Gastrocnemius medialis (tissue), 4 donors: ENCODE measurements at regions of chr14 and their contacts with region 1.

Region 1: DNA sequence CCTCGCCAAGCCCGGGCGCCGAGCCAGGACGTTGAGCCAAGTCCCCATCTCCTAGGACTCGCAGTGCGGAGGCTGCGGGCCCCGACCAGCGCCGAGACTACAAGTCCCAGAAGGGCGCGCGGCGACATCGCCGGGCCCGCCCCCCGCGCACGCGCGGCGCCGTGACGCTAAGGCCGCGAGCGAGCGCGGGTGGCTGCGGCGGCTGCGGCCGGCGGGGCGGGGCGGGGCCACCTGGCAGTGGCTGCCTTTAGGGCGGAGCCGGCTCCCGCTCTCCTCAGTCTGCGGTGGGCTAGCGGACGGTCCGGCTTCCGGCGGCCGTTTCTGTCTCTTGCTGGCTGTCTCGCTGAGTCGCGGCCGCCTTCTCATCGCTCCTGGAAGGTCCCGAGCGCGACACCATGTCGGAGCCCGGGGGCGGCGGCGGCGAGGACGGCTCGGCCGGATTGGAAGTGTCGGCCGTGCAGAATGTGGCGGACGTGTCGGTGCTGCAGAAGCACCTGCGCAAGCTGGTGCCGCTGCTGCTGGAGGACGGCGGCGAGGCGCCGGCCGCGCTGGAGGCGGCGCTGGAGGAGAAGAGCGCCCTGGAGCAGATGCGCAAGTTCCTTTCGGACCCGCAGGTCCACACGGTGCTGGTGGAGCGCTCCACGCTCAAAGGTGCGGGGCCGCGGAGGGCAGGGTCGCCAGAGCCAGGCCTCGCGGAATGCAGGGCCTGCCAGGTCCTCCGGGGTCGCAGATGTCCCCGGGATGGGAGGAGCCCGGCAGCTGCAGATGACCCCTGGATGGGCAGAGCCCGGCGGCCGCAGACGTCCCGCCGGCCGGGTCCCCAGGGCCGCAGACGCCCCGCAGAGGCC is at the start of gene DYNC1H1:
- DNase-seq: peak; percentile 82 to 92
- ATAC-seq: peak; percentile 82 to 86
- H3K4me3 ChIP-seq: peak within 1 kb of the TSS; percentile 80 to 99 (median 94)
- H3K27ac ChIP-seq: peak within 1 kb of the TSS; percentile 92 to 98 (median 94)
- H3K4me1 ChIP-seq: peaks cover 38% of the 10 kb centered on the region in 2 donors
- H3K27me3 ChIP-seq: no peaks in the 10 kb centered on the region
- CTCF ChIP-seq: no peak
- POLR2A ChIP-seq: peak; percentile 99 to 100
- total RNA-seq, gene DYNC1H1: 486 to 737 (median 718) TPM

Region 2: DNA sequence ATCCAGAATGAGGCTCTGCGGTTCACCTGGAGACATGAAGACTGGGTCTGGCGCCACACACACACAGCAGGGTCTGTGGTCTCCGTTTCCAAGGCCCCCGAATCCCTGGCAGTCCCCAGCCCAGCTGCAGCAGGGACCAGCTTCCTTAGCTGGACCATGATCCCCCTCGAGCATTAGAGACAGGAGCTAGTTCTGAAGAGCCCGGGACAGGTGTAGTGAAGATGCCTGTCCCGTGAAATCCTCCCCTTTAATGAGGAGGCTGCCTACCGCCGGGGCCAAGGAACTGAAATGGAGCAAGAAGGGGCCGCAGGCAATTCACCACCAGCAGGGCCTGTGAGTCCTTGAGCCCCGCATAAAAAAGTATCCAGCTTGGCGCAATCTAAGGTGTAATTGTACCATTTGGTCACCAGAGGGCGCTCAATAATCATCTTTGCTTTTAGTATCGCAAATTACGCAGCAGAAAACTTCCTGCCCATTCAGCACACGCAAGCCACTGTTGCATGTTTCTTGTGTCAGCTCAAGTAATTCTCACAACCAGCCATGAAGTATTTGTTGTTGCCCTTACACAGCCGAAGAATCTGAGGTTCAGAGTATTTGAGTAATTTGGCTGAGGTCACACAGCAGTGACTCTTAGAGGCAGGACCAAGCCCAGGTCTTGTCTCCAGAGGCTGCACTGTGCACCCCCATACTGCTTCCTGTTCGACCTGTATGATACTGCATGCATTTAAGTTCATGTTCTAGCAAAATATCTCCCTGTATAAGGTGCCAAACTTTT is 257.3 kb before region 1 on chr14:
- in situ Hi-C with region 1: no loop called
- intact Hi-C with region 1: loop called (anchors 5 kb)
- DNase-seq: peak; percentile 32 to 56
- ATAC-seq: peak; percentile 75 to 90
- H3K4me3 ChIP-seq: peak overlapping the region in 1 of 4 donors; percentile 10
- H3K27ac ChIP-seq: peak overlapping the region; percentile 58 to 71 (median 66)
- H3K4me1 ChIP-seq: peaks cover 0 to 7% of the 10 kb centered on the region in 2 donors
- H3K27me3 ChIP-seq: peaks cover 0 to 4% (median 0%) of the 10 kb centered on the region in 3 donors
- CTCF ChIP-seq: peak; percentile 80 to 91 (median 89)
- POLR2A ChIP-seq: no peak

Region 3: DNA sequence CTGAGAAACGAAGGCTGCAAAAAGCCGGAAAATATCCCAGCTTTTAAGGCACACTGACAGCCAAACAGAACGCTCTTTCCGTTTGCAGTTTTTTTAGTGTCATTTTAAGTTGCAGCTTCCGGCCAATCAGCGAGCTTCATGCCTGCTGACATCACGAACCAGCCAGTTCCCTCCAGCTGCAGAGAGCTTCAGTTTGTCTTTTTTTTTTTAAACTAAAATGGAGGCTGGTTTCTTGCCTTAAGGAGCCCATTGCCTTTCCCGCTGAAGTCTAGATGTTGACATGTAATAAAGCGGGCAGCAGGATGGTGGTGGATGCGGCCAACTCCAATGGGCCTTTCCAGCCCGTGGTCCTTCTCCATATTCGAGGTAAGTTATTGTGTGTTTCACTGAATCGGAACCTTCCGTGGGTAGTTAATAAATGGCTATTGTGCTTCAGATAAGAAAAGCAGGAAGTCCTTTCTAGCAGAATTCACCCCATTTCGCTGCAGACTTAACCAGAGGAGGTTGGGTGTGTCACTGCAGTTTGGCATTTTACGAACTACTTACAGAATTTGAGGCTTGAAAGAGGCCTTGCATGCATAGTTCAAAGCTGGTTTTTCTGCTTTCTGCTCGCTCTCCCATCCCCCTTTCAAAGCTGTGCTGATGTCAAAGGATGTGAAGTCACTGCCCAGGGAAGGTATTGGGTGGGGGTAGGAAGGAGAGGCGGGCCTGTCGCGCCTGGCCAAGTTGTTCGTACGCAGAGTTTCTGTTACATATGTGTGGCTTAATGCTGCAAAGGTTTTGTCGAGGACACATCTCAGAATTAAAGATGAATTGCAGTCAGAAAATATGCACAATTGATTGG is 154.6 kb before region 1 on chr14:
- in situ Hi-C with region 1: no loop called
- intact Hi-C with region 1: loop called (anchors 5 kb)
- DNase-seq: peak; percentile 79 to 87
- ATAC-seq: peak; percentile 91 to 93
- H3K4me3 ChIP-seq: peak overlapping the region; percentile 67 to 82 (median 72)
- H3K27ac ChIP-seq: peak overlapping the region; percentile 91 to 96 (median 93)
- H3K4me1 ChIP-seq: peaks cover 43 to 50% of the 10 kb centered on the region in 2 donors
- H3K27me3 ChIP-seq: no peaks in the 10 kb centered on the region
- CTCF ChIP-seq: no peak
- POLR2A ChIP-seq: peak; percentile 44 to 74

Region 4: DNA sequence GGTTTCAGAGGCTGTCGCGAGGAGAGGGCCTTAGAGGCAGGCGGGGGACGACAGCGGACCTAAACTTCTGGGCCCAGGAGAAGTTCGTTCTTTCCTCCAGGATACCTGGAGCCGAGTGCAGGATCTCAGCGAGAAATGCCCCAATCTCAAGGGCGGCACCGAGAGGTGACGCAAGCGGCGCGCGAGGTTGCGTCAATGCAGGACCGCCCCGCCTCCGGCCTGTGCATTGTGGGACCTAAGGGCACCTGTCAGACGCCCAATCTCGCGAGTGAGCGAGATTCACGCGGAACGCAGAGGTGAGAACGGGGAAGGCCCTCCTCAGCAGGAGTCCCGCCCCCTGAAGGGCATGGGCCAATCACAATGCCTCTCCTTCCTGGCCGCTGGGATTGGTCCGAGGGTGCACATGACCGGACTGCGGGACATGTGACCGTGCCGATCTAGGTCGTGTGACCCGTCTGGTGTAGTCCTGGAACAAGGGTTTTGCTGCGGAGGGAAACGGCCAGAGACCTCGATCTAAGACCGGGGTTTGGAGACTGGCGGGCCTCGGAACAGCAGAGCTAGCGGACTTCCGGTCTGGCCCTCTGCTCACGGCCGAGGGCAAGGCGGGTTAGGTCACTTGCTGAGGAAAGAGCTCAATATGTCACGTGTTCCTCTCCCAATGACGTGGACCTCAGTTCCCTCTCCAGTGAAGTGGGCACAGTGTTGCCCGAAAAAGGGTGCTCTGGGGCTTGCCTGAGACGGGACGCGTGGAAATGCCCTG is 16.4 kb before region 1 on chr14:
- in situ Hi-C with region 1: no loop called
- intact Hi-C with region 1: loop called (anchors 1 kb)
- DNase-seq: peak; percentile 100
- ATAC-seq: peak; percentile 95 to 99
- H3K4me3 ChIP-seq: peak overlapping the region; percentile 77 to 96 (median 89)
- H3K27ac ChIP-seq: peak overlapping the region; percentile 95 to 100 (median 99)
- H3K4me1 ChIP-seq: peaks cover 17 to 20% of the 10 kb centered on the region in 2 donors
- H3K27me3 ChIP-seq: no peaks in the 10 kb centered on the region
- CTCF ChIP-seq: peak in 2 of 5 experiments; percentile 9 to 36
- POLR2A ChIP-seq: peak; percentile 74 to 90

Region 5: GRCh38 chr14:102086972-102087761 is 122.6 kb after region 1 on chr14 and contains the start of gene HSP90AA1:
- in situ Hi-C with region 1: loop called in 1 of 4 experiments (anchors 10 kb)
- intact Hi-C with region 1: loop called (anchors 1 kb)
- DNase-seq: peak; percentile 84 to 93
- ATAC-seq: peak; percentile 88 to 90
- H3K4me3 ChIP-seq: peak within 1 kb of the TSS; percentile 72 to 93 (median 90)
- H3K27ac ChIP-seq: peak within 1 kb of the TSS; percentile 96 to 99 (median 99)
- H3K4me1 ChIP-seq: peaks cover 26 to 43% of the 10 kb centered on the region in 2 donors
- H3K27me3 ChIP-seq: no peaks in the 10 kb centered on the region
- CTCF ChIP-seq: peak in 2 of 5 experiments; percentile 25 to 32
- POLR2A ChIP-seq: peak; percentile 97 to 99
- total RNA-seq, gene HSP90AA1: 227 to 609 (median 488) TPM

Region 6: DNA sequence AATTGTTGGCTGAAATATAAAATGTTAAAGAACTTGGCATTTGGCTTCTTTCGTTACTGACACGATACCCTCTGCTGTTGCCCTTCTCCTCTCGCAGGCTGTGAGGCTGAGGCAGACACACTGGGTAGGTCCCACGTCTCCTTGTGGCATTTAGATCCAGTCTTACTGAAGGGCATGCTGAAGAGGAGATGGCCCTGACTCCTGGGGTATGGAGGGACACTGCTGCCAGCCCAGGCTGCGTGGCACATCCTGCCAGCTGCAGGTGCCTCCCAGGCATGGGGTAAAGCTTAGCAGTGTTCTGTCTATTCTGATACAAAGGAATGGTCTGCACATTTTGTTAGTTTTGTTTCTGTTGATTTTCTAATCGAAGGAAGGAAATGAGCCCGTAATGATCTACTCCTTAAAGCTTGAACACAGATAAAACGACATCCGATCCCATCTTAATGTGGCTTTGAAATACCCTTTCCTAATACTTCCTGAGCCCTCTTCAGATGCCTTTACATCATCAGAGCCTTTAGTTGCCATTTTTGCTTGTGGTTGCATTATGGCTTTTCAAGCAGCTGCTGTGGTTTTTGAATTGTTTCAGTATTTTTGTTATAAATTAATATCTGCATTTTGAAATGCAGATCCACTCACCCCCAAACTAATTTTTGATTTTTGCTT is 236.3 kb after region 1 on chr14:
- in situ Hi-C with region 1: no loop called
- intact Hi-C with region 1: no loop called
- DNase-seq: no peak
- ATAC-seq: no peak
- H3K4me3 ChIP-seq: no peak overlapping the region
- H3K27ac ChIP-seq: no peak overlapping the region
- H3K4me1 ChIP-seq: peaks cover 17 to 23% of the 10 kb centered on the region in 2 donors
- H3K27me3 ChIP-seq: no peaks in the 10 kb centered on the region
- CTCF ChIP-seq: no peak
- POLR2A ChIP-seq: no peak

Region 7: DNA sequence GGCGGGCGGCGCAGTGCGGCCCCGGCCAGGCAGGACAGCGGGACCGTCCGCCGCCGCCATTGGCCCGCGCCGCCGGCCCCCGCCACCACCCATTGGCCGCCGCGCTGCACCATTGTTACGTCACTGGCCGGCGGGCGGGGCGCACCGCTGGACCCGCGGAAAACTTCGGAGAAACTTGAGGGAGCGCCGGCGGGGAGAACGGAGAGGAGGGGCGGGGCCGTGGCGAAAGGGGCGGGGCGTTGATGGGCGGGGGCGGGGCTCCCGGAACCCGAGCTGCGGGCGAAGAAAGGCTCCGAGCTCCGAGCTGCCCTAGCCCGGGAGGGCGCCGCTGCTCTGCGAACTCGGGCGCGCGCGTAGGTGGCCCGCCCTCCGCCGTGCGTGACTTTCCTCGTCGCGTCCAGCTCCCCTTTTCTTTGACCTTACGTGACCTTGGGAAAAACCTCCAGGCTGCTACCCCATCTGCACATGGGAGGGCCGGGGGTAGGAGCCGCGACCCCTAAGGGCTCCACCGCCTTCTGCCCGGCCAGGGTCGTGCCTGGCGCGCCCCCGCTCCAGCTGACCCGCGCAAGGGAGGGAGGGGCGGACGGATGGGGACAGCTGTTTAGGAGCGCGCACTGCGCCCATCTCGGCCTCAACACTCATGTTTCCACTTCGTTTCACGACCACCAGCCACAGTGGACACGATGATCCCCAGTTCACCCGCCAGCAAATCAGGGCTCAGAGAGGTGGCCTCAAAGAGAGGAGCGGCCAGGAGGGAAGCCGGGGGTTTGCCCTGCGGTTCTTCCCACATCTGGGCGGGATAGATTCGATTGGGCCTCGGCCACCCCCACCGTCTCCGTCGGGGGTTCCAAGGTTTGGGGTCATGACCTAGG is 545.5 kb after region 1 on chr14 and contains the start of gene ANKRD9:
- in situ Hi-C with region 1: no loop called
- intact Hi-C with region 1: loop called (anchors 10 kb)
- DNase-seq: peak; percentile 93 to 95
- ATAC-seq: peak; percentile 57 to 74
- H3K4me3 ChIP-seq: peak within 1 kb of the TSS; percentile 65 to 81 (median 70)
- H3K27ac ChIP-seq: peak within 1 kb of the TSS; percentile 95 to 99 (median 96)
- H3K4me1 ChIP-seq: peaks cover 14 to 33% of the 10 kb centered on the region in 2 donors
- H3K27me3 ChIP-seq: no peaks in the 10 kb centered on the region
- CTCF ChIP-seq: no peak
- POLR2A ChIP-seq: peak; percentile 74 to 81
- total RNA-seq, gene ANKRD9: 155 to 450 (median 216) TPM